Head of caudate nucleus (tissue), 42 donors: ENCODE measurements at regions of chr1 and their contacts with region 1.

Region 1: DNA sequence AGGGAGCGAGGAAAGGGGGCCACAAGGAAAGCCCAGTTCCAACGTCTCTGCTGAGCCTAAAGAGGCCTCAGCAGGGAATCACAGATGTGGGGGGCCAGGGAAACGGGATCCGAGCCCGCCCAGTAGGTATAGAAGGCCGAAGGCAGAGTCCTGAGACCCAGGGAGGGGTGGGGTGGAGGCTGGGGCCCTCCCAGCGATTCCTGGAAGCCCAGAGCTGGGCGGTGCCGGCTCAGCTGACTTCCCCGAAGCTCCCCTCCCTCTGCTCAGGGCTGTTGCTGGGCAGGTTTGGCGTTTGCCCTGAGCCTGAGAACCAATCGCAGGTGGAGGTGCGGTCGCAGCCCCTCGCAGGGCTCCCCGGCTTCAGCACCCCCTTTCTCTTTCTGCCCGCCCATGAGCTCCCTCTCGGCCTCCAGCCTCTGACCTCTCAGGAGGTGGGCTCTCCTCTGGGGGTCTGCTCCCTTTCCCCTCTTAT is 12.8 kb downstream of the ADAMTSL4 start:
- DNase-seq: peak; percentile 51 to 90 (median 76)

Region 2: DNA sequence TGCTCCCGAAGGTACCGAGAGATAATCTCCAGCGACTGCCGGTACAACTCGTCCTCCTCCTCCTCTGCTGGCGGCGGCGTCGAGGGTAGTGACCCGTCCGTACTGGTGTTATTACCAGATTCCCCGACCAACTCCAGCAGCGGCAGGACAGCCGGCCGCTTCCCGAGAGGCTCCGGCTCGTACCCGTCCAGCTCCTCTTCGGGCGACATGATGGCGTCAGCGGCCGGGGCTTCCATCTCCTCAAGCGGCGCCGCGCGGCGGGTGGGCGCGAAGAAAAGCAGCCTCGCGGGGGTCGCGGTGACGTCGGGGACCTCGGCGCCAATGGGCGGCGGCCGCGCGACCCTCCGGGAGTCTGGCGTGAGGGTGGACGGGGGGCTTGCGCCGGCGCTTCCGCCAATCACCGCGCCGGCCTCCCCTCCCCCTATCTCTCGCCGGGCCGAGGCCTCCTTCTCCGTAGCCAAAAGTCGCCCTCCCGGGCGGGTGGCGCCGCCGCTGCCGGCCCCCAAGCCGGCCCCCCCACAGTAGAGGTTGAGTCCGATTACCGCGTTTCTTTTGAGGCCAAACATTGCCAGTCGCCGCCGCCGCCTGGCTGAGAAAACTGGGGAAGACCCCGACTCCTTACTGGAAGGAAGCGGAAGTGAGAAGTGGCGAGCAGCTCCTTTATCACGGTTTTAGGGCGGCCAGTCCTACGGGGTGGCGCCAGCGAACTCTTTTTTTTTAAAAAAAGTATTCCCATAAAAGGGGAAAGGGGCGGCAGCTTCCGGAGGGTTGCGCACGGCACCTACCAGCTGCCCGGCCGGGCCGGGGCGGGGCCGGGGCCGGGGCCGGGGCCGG is 17.2 kb after region 1 on chr1 and contains the start of gene MCL1:
- intact Hi-C with region 1: loop called (anchors 1 kb)
- DNase-seq: peak; percentile 76 to 97 (median 92)